ENCODE measurements at regions of chr18 and their contacts with region 1.

Region 1: GRCh38 chr18:12934454-12935071 is 13.2 kb upstream of the SEH1L start:
- DNase-seq: peak; percentile 88
- ATAC-seq: peak; percentile 94

Region 2: GRCh38 chr18:12726774-12727550 is 207.6 kb before region 1 on chr18:
- intact Hi-C with region 1: loop called (anchors 5 kb)
- DNase-seq: no peak
- ATAC-seq: peak; percentile 54

Region 3: DNA sequence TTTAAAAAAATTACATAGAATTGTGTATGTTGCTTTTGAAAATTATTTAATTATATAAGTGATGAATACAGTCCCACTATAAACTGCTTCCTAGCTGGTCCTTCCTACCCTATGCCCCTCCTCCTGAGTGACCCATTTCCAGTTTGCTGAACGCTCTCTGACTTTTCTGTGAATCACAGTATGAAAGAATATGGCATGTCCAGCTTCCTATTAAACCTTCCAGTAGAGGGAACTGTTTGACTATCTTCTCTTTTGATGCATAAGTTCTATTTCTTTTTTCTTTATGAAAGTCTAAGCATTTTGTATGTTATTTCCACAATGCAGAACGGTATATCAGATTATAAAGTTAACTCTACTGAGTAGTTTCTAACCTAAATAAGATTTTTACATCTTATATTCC is 190.5 kb before region 1 on chr18:
- intact Hi-C with region 1: loop called (anchors 5 kb)
- DNase-seq: no peak
- ATAC-seq: peak; percentile 38

Region 4: DNA sequence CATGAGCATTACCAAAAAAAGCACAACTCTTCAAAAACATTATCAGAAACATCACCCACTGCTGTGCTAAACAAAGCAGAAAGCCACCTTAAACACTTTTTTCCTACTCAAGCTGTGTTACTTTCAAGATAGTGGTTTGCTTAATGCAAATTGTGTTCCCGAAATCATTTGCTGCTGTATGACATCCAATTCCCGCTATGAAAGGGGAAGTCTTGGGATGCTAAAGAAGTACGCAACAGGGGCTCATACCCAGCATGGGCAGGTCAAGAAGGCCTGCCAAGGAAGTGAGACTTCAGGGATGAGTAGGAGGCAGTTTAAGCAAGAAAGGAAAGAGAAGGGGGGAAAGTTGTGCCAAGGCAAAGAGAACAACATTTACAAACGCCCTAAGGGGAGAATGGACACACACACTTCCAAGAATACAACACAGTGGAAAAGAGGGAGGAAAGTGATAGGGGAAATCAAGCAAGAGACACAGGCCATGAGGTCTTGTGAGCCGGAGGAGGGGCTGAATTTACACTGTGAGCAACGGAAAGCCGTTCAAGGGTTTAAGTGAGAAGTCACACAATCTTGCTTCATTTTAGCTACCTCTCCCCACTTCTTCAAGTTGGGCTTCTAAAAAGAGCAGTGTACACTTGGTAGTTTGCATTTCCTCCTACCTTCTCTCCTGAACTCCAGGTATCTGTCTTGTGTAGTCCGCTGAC is 54.6 kb before region 1 on chr18:
- intact Hi-C with region 1: no loop called
- DNase-seq: no peak
- ATAC-seq: no peak

Region 5: GRCh38 chr18:12990967-12991838 is 56.6 kb after region 1 on chr18 and contains the start of gene CEP192:
- intact Hi-C with region 1: no loop called
- DNase-seq: peak; percentile 98
- ATAC-seq: peak; percentile 98
- total RNA-seq, gene CEP192: 26.7 TPM